ENCODE measurements at regions of chr17 and their contacts with region 1.

Region 1: DNA sequence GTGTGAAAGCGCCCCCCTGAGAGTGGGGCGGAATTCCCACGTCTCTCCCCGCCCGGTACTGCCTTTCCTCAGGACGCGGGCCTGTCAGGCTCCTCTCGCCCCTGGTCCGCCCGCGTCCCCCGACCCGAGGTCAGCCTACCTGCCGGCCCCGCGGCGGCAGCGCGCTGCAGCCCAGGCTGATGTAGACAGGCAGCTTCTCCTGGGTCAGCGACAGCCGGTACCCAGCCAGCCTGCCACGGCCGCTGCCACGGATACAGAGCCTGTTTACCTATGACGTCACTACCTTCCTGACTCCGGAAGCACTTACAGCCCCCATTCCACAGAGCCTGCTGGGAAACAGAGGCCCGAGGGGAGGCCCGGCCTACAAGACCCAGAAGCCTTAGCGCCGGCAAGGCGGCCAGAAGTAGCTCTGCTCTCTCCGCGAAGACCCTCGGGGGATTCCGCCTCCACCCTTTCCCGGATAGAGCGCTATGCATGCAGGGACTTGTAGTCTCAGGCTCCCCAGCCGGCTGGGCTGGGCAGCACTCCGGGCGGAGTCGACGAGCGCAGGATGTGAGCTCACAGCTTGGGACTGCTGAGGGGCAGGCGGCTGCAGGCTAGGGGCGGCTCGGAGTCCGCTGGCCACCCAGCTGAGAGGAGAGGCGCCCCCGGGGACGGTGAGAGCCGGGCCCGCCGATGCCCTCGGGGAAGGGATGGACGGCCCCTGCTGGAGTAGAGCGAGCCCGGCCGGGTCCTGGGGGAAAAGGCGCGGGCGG is at the starts of genes IFT20 and TNFAIP1:
- DNase-seq: peak; percentile 99
- ATAC-seq: peak; percentile 98
- H3K4me3 Mint-ChIP-seq: peak within 1 kb of the TSS; percentile 84
- H3K27ac Mint-ChIP-seq: peak within 1 kb of the TSS; percentile 80
- H3K4me1 Mint-ChIP-seq: peaks cover 31% of the 10 kb centered on the region
- H3K27me3 Mint-ChIP-seq: no peaks in the 10 kb centered on the region
- CTCF ChIP-seq: no peak
- total RNA-seq, gene IFT20: 16.7 to 18.8 TPM
- total RNA-seq, gene TNFAIP1: 19.5 to 20.9 TPM

Region 2: DNA sequence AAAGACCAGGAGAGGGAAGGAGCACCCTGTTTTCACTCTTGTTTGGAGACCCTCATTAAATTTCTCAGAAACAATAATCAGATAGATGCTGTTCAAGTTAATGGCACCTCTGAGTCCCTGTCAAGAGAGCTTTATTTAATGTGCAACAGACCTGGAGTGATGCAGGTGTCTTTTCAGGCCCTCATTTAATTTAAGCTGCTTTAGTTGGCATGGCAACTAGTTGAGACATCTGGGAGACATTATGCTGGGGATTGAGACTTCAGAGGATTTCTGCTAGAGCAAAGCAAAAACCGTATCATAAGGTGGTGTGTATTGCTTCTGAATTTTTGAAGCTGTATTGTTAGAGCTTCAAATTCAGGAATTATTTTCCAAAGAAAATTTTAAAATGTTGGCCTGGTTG is 184.4 kb before region 1 on chr17:
- CTCF ChIA-PET with region 1: no interaction called
- POLR2A ChIA-PET with region 1: no interaction called
- intact Hi-C with region 1: no loop called
- DNase-seq: no peak
- ATAC-seq: no peak
- H3K4me3 Mint-ChIP-seq: no peak overlapping the region
- H3K27ac Mint-ChIP-seq: no peak overlapping the region
- H3K4me1 Mint-ChIP-seq: no peaks in the 10 kb centered on the region
- H3K27me3 Mint-ChIP-seq: no peaks in the 10 kb centered on the region
- CTCF ChIP-seq: no peak

Region 3: DNA sequence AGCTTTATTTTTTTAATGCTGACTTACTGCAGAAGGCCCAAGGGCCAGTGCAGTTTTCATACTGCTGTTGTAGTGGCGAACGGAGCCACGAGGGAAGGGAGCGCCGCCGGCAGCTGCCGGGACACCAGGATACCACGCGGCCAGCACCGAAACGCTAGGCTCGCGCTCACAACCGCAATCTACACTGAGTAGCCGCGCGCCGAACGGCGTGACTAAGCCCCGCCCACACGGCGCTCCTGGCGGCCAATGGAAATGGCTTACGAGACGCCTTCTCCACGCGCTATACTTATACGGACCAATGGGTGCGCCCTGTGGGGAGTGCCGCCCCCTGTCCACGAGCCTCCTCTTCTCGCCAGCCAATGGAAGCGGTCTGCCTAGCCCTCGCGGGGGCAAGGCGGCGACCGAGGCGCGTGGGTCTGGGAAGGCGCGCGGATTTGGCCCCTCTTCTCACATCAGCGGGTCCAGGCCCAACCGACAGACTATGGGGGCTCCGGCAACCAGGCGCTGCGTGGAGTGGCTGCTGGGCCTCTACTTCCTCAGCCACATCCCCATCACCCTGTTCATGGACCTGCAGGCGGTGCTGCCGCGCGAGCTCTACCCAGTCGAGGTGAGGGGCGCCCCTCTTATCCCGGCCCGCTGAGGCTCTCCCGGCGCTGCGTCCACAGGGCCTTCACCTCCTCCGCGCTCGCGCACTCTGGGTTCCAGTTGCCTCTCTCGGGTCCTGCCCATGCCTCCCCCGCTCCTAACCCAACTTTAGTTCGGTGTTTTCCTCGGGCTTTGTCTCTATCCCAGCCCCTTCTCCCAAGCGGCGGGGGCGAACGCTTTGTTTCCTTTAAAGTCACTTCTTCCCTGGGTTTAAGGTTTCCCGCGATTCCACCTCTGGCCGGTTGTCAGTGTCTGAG is 16.4 kb before region 1 on chr17 and contains the start of gene TMEM97:
- CTCF ChIA-PET with region 1: interaction called, 12 read pairs
- POLR2A ChIA-PET with region 1: interaction called, 51 read pairs
- intact Hi-C with region 1: no loop called
- DNase-seq: peak; percentile 99
- ATAC-seq: peak; percentile 99
- H3K4me3 Mint-ChIP-seq: peak within 1 kb of the TSS; percentile 96
- H3K27ac Mint-ChIP-seq: peak within 1 kb of the TSS; percentile 92
- H3K4me1 Mint-ChIP-seq: peaks cover 32% of the 10 kb centered on the region
- H3K27me3 Mint-ChIP-seq: no peaks in the 10 kb centered on the region
- CTCF ChIP-seq: peak; percentile 29
- total RNA-seq, gene TMEM97: 36.1 to 36.2 TPM

Region 4: DNA sequence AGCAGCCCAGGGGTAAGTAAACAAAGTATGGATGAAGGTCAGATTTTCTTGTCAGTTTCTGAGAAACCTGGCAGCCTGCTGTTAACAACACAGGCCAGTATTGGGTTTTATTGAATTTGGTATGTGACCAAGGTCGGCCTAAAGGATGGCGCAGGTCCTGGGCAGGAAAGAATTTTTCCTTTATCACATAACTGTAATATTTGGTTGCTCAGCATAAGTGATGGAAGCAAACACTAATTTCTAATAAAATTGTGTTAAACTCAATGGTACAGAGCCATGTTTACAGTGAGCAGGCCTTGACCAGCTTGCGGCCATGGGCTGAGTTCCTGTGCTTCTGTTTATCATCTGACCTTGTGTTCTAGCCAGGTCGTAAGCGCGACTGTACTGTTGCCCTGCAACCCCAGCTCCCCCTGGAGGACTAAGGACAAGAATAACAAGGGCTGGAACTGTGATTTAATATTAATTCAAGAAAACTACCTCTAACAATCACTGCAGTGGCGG is 11.4 kb after region 1 on chr17:
- CTCF ChIA-PET with region 1: interaction called, 10 read pairs
- POLR2A ChIA-PET with region 1: interaction called, 4 read pairs
- intact Hi-C with region 1: no loop called
- DNase-seq: no peak
- ATAC-seq: no peak
- H3K4me3 Mint-ChIP-seq: no peak overlapping the region
- H3K27ac Mint-ChIP-seq: no peak overlapping the region
- H3K4me1 Mint-ChIP-seq: no peaks in the 10 kb centered on the region
- H3K27me3 Mint-ChIP-seq: no peaks in the 10 kb centered on the region
- CTCF ChIP-seq: no peak

Region 5: DNA sequence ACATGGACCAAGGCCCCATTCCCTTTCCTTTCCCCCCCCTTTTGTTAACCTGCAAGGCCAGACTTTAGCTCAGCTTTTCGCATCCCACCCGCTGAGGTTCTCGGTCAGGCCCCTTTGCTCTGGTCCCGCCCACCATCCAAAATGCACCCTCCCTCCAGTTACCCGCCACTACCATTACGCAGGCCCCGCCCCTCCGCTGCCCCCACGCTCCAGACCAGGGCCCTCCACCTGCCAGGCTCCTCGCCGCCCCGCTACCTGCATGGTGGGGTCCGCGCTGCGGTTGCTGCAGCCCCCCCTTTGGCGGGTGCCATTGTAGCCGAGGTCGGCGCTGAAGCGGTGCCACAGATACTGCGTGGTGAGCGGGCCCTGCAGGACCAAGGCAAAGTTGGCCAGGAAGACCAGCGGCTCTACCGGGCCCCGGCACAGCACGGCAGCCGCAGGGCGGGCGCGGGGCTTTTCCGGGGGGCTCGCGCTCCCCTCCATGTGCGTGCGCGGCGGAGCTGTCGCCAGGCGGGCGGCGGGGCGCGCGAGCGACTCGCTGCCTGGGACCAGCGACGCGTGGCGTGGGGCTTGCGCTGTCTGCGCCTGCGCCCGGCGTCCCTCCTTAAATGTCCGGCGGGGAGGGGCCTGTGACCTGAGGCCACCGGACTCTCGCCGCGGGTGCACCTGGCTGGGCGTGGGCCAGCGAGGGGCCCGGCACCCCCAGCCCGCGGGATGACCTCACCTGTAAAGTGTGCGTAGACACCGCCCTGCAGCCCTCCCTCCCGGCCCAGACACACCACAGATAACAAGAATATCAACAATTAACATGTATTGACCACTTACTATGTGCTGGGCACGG is 70.5 kb after region 1 on chr17 and contains the start of gene SLC46A1:
- CTCF ChIA-PET with region 1: no interaction called
- POLR2A ChIA-PET with region 1: no interaction called
- intact Hi-C with region 1: no loop called
- DNase-seq: peak; percentile 82
- ATAC-seq: peak; percentile 95
- H3K4me3 Mint-ChIP-seq: peak within 1 kb of the TSS; percentile 67
- H3K27ac Mint-ChIP-seq: peak within 1 kb of the TSS; percentile 32
- H3K4me1 Mint-ChIP-seq: peaks cover 2% of the 10 kb centered on the region
- H3K27me3 Mint-ChIP-seq: no peaks in the 10 kb centered on the region
- CTCF ChIP-seq: no peak
- total RNA-seq, gene SLC46A1: 2.1 to 3.1 TPM

Measured in activated CD8-positive, alpha-beta T cell treated with anti-CD3 and anti-CD28 coated beads for 36 hours (primary cell).